H1 (cell line): ENCODE measurements at regions of chr19 and their contacts with region 1.

Region 1: GRCh38 chr19:10000171-10000826 is 10.0 kb downstream of the COL5A3 start:
- DNase-seq: peak; percentile 44 to 87
- H3K4me3 ChIP-seq: no peak overlapping the region
- H3K27ac ChIP-seq: no peak overlapping the region
- H3K4me1 ChIP-seq: no peaks in the 10 kb centered on the region
- H3K27me3 ChIP-seq: no peaks in the 10 kb centered on the region; a peak in 3 of 7 replicates
- CTCF ChIP-seq: peak; percentile 77 to 89 (median 79)
- EP300 ChIP-seq: no peak
- POLR2A ChIP-seq: no peak
- RAD21 ChIP-seq: peak; percentile 79 to 80

Region 2: GRCh38 chr19:9834726-9835506 is 165.4 kb before region 1 on chr19 and contains the start of gene PIN1:
- CTCF ChIA-PET with region 1: no interaction called
- POLR2A ChIA-PET with region 1: no interaction called
- DNase-seq: peak; percentile 98
- H3K4me3 ChIP-seq: peak within 1 kb of the TSS; percentile 64 to 84 (median 74)
- H3K27ac ChIP-seq: 0 out of 2 replicates have a peak within 1 kb of the TSS, but pooled peaks have one; percentile 65
- H3K4me1 ChIP-seq: peaks cover 0 to 4% (median 1%) of the 10 kb centered on the region in 4 experiments; a peak in 3 of 7 replicates
- H3K27me3 ChIP-seq: no peaks in the 10 kb centered on the region
- CTCF ChIP-seq: peak; percentile 49 to 67 (median 63)
- EP300 ChIP-seq: no peak
- POLR2A ChIP-seq: peak; percentile 13 to 74
- RAD21 ChIP-seq: 0 out of 4 replicates have a peak, but pooled peaks of 1 of the 2 experiments have one; percentile 9
- total RNA-seq, gene PIN1: 78.3 and 88.0 TPM in 2 replicates

Region 3: DNA sequence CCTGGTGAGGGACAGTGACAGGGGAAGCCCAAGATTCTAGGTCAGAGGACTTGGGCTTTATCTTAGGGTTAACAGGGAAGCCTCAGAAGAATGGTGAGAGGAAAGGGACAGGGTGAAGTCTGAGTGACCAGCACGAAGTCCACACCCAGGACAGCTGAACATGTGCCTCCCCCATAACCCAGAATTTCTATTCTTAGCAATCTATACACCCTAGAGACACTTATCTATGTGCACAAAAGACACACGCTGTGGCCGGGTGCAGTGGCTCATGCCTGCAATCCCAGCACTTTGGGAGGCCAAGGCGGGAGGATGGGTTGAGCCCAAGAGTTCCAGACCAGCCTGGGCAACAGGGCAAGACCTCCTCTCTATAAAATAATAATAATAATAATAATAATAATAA is 52.9 kb before region 1 on chr19:
- CTCF ChIA-PET with region 1: interaction called, 24 read pairs
- POLR2A ChIA-PET with region 1: no interaction called
- DNase-seq: no peak
- H3K4me3 ChIP-seq: no peak overlapping the region
- H3K27ac ChIP-seq: no peak overlapping the region
- H3K4me1 ChIP-seq: peaks cover 1 to 11% (median 6%) of the 10 kb centered on the region in 4 experiments
- H3K27me3 ChIP-seq: no peaks in the 10 kb centered on the region; a peak in 1 of 7 replicates
- CTCF ChIP-seq: no peak
- EP300 ChIP-seq: no peak
- POLR2A ChIP-seq: no peak
- RAD21 ChIP-seq: no peak

Region 4: DNA sequence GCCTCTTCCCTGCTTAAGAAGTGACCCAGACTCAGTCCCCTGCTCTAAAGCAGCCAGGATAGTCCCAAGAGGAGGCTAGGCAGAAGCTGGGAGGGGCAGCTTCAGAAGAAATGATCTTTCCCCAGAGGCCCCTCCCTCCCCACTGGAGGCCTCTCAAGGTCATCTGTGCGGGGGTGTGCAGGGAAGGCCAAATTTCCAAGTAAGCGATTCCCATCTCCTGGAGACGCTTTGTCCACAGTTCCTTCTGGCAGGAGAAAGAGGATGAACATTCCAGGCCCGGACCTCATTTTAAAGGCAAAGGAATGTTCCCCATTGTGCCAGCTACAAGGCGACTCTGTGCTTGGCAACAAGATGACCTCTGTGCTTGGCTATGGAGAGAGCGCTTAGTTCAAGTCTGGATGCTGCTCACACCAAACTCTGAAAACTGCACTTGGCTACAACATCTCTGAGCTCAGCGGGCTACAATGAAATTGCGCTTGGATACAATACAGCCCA is 13.5 kb before region 1 on chr19:
- CTCF ChIA-PET with region 1: interaction called, 83 read pairs
- POLR2A ChIA-PET with region 1: no interaction called
- DNase-seq: no peak
- H3K4me3 ChIP-seq: no peak overlapping the region
- H3K27ac ChIP-seq: no peak overlapping the region
- H3K4me1 ChIP-seq: peaks cover 0 to 4% (median 2%) of the 10 kb centered on the region in 4 experiments; a peak in 3 of 7 replicates
- H3K27me3 ChIP-seq: no peaks in the 10 kb centered on the region
- CTCF ChIP-seq: no peak
- EP300 ChIP-seq: no peak
- POLR2A ChIP-seq: no peak
- RAD21 ChIP-seq: no peak

Region 5: GRCh38 chr19:10027158-10027693 is 26.9 kb after region 1 on chr19:
- CTCF ChIA-PET with region 1: interaction called, 23 read pairs
- POLR2A ChIA-PET with region 1: no interaction called
- DNase-seq: no peak
- H3K4me3 ChIP-seq: peak overlapping the region in 3 of 4 experiments; percentile 9 to 46 (median 16); a peak in 3 of 8 replicates
- H3K27ac ChIP-seq: no peak overlapping the region
- H3K4me1 ChIP-seq: no peaks in the 10 kb centered on the region
- H3K27me3 ChIP-seq: peaks cover 0 to 3% (median 0%) of the 10 kb centered on the region in 4 experiments; a peak in 1 of 7 replicates
- CTCF ChIP-seq: no peak
- EP300 ChIP-seq: no peak
- POLR2A ChIP-seq: no peak
- RAD21 ChIP-seq: no peak